Gastrocnemius medialis (tissue), 4 donors: ENCODE measurements at regions of chr17 and their contacts with region 1.

Region 1: DNA sequence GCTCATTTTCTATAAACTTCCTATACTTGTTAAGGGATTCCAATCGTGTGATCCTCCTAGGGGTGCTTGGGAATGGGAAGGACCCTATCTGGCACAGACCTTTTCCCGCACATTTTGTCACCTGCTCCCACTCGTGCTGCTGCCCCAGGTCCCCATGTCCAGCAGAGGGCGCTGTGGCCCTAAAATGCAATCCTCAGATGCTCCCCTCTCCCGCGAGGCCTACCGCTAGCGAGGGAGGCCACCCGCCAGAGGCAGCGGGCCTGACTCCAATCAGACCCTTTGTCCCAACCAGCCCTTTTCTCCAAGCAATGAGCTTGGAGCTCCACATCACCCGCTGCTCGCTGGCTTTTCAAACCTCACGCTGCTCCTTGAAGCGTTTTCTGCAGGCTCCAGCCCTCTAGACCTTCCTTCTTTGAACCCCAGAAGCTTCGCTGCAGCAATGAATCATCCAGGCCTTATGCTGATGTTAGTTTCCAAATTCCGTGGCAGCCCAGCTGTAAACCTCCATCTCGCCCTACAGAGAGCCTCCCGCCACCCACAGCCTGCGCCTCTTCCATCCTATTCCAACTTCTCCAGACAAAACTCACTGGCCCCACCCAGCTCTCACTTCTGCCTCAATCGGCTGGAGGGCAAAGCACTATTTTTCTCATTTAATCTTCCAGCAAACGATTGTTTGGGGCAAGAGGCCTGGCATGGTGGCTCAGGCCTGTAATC is 23.6 kb upstream of the FZD2 start:
- DNase-seq: peak; percentile 58 to 64
- ATAC-seq: peak; percentile 75 to 84
- H3K4me3 ChIP-seq: no peak overlapping the region
- H3K27ac ChIP-seq: no peak overlapping the region
- H3K4me1 ChIP-seq: no peaks in the 10 kb centered on the region
- H3K27me3 ChIP-seq: no peaks in the 10 kb centered on the region
- CTCF ChIP-seq: peak; percentile 86 to 92 (median 90)
- POLR2A ChIP-seq: no peak

Region 2: DNA sequence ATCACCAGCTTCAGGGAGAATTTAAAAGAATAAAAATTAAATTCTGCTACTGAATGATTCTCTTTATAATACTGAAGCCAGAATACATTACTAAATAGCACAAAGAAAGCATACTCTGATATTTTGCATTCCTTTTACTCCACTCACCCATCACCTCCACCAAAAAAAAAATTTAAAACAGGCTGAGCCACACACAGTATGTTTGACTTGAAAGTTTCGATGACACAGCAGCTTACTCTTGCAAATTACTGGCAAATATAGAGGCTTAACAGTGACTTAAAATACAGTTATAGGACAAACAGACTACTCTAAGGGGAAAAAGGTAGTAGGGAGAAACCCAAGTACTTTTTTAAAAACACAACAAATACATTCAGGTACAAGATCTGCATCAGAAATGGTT is 69.7 kb before region 1 on chr17:
- in situ Hi-C with region 1: no loop called
- intact Hi-C with region 1: no loop called
- DNase-seq: no peak
- ATAC-seq: no peak
- H3K4me3 ChIP-seq: no peak overlapping the region
- H3K27ac ChIP-seq: peak overlapping the region; percentile 65 to 82 (median 81)
- H3K4me1 ChIP-seq: peaks cover 45 to 48% of the 10 kb centered on the region in 2 donors
- H3K27me3 ChIP-seq: no peaks in the 10 kb centered on the region
- CTCF ChIP-seq: no peak
- POLR2A ChIP-seq: no peak

Region 3: DNA sequence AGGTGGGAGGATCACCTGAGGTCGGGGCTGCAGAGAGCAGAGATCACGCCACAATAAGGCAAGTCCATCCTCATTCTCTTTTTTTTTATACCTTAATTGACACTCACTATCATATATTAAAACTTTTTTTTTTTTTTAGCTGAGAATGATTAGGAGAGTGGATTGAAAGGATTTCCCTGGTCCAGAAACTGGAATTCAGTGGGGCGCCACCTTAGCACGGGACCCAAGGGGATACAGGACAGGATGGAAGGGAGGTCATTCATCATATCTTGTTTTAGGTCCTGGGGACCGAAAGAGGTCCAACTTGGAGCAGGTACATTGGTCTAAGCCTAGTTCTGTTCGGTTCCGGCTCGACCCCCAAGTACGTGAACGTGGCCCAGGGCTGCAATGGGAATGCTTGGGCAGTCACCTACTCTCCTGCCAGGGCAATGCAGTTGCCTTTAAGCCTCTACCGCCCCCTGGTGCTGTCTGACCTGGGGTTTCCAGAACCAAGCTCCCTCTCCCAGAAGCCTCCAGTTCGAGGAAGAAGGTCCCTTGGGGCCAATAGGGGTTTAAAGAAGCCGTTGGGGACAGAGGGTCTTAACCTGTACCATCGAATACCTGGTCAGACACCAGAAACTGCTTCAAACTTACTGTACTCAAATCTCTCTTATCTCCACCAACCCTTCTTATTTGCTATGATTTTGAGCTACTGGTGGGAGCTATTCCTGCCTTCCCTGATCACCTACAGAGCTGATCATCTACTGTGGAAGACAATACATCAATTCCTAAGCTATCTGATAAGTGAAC is 10.6 kb before region 1 on chr17:
- in situ Hi-C with region 1: no loop called
- intact Hi-C with region 1: no loop called
- DNase-seq: peak; percentile 53 to 76
- ATAC-seq: peak; percentile 88 to 96
- H3K4me3 ChIP-seq: no peak overlapping the region
- H3K27ac ChIP-seq: no peak overlapping the region
- H3K4me1 ChIP-seq: no peaks in the 10 kb centered on the region
- H3K27me3 ChIP-seq: no peaks in the 10 kb centered on the region
- CTCF ChIP-seq: peak; percentile 69 to 86 (median 85)
- POLR2A ChIP-seq: no peak

Region 4: DNA sequence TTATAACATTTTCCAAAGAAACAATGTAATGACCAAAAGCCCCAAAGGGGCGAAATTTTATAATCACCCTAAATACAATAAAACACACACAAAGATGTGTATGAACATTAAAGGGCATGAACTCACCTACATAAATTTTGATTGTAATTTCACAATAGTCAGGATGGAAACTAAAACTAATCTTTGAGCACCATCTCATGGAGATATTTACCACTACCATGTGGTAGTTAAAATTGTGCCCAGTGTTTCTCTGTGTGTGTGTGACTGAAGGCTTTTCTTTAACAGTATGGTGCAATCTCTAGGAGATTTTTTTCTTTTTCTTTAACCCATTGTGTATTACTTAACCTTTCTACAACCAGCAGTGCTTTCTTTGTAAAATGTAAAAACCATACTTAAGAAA is 102.9 kb after region 1 on chr17:
- in situ Hi-C with region 1: loop called in 1 of 4 experiments (anchors 25 kb)
- intact Hi-C with region 1: loop called (anchors 1 kb)
- DNase-seq: no peak
- ATAC-seq: peak in 1 of 2 donors; percentile 27
- H3K4me3 ChIP-seq: no peak overlapping the region
- H3K27ac ChIP-seq: no peak overlapping the region
- H3K4me1 ChIP-seq: no peaks in the 10 kb centered on the region
- H3K27me3 ChIP-seq: no peaks in the 10 kb centered on the region
- CTCF ChIP-seq: peak in 2 of 5 experiments; percentile 6 to 19
- POLR2A ChIP-seq: no peak